MCF 10A (cell line): ENCODE measurements at regions of chr19 and their contacts with region 1.

Region 1: GRCh38 chr19:3429581-3430080 is 50.7 kb downstream of the SMIM24 start:
- DNase-seq: peak; percentile 99
- H3K4me3 Mint-ChIP-seq: peak overlapping the region; percentile 51
- H3K27ac Mint-ChIP-seq: peak overlapping the region; percentile 95
- H3K4me1 Mint-ChIP-seq: peaks cover 22% of the 10 kb centered on the region
- H3K27me3 Mint-ChIP-seq: no peaks in the 10 kb centered on the region
- CTCF ChIP-seq: peak; percentile 92

Region 2: DNA sequence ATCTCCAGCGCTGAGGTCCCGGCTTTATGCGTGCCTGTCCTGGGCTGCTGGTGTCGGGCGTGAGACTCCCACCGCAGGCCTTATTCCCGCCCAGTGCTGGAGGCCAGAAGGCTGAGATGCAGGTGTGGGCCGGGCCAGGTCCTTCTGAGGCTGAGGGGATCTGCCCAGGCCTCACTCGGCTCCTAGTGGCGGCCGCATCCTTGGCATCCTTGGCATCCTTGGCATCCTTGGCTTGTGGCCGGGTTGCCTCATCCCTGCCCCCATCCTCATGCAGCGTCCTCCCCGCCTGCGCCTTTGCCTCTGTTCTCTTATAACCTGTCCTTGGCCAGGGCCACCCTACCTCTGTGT is 313.4 kb before region 1 on chr19:
- CTCF ChIA-PET with region 1: no interaction called
- POLR2A ChIA-PET with region 1: no interaction called
- intact Hi-C with region 1: no loop called
- DNase-seq: peak; percentile 59
- H3K4me3 Mint-ChIP-seq: no peak overlapping the region
- H3K27ac Mint-ChIP-seq: no peak overlapping the region
- H3K4me1 Mint-ChIP-seq: no peaks in the 10 kb centered on the region
- H3K27me3 Mint-ChIP-seq: no peaks in the 10 kb centered on the region
- CTCF ChIP-seq: no peak

Region 3: DNA sequence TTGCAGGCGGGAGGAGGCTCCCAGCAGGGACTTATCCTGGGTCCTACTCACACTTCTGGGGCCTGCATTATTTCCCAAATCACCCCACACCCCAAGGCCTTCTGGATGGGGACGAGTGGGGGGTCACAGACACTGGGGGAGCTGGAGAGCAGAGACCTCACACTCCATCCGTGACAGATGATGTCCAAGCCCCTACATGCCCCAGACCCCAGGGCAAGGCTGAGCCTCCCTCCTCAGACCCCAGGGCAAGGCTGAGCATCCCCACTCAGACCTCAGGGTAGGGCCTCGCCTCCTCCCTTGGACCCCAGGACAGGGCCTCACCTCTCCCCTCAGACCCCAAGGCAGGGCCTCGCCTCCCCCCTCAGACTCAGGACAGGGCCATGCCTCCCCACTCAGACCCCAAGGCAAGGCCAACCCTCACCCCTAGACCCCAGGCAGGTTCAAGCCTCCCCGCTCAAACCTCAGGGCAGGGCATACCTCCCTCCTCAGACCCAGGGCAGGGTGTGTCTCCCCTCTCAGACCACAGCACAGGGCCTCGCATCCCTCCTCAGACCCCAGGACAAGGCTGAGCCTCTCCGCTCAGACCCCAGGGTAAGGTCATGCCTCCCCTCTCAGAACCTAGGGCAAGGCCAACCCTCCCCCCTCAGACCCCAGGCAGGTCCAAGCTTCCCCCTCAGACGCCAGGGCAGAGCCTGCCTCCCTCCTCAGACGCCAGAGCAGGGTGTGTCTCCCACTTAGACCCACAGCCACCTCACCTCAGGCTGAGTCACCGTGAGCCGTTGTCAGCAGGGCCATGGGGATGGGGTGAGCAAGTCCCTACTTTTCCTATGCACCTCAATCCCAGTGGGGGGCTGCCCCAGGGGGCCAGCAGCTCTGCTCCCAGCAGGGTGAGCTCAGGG is 252.8 kb before region 1 on chr19:
- CTCF ChIA-PET with region 1: no interaction called
- POLR2A ChIA-PET with region 1: no interaction called
- intact Hi-C with region 1: no loop called
- DNase-seq: peak; percentile 80
- H3K4me3 Mint-ChIP-seq: peak overlapping the region; percentile 60
- H3K27ac Mint-ChIP-seq: peak overlapping the region; percentile 100
- H3K4me1 Mint-ChIP-seq: peaks cover 21% of the 10 kb centered on the region
- H3K27me3 Mint-ChIP-seq: no peaks in the 10 kb centered on the region
- CTCF ChIP-seq: no peak

Region 4: DNA sequence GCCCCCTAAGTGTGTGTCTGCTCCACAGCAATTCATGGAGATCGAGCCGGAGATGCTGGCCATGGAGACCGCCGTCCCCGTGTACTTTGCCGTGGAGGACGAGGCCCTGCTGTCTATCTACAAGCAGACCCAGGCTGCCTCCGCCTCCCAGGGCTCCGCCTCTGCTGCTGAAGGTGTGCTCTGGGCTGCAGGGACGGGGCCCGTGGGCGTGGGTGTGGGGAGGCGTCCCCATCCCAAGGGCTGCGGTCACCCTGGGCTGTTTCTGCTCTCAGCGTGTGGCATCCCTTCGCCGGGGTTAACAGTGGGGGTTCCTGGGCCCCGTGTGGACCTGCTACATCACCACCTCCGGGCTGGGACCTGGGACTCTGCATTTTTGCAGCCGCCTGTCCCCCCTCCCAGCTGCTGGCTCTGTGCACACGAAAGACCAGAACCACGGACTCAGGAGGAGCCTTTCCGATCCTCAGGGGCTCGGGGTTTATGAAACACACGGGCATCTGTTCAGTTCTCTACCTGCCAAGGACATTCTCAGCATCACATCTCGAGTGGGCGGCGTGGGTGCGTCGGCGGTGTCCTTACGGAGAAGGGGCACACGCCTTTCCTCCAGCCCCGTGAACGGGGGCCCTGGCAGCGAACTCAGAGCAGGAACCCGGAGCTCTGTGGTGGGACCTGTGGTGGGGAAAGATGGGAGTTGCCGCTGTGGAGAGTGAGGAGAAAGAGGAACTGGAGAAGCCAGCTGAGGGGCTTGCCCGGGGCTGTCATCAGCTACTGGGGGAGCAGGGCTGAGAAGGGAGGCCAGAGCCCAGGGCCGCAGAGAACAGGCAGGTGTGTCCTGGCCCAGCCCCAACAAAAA is 236.2 kb before region 1 on chr19:
- CTCF ChIA-PET with region 1: no interaction called
- POLR2A ChIA-PET with region 1: no interaction called
- intact Hi-C with region 1: no loop called
- DNase-seq: no peak
- H3K4me3 Mint-ChIP-seq: no peak overlapping the region
- H3K27ac Mint-ChIP-seq: no peak overlapping the region
- H3K4me1 Mint-ChIP-seq: peaks cover 7% of the 10 kb centered on the region
- H3K27me3 Mint-ChIP-seq: no peaks in the 10 kb centered on the region
- CTCF ChIP-seq: no peak

Region 5: GRCh38 chr19:3324321-3324856 is 105.2 kb before region 1 on chr19:
- CTCF ChIA-PET with region 1: interaction called, 14 read pairs
- POLR2A ChIA-PET with region 1: interaction called, 7 read pairs
- intact Hi-C with region 1: loop called (anchors 1 kb)
- DNase-seq: peak; percentile 62
- H3K4me3 Mint-ChIP-seq: no peak overlapping the region
- H3K27ac Mint-ChIP-seq: no peak overlapping the region
- H3K4me1 Mint-ChIP-seq: no peaks in the 10 kb centered on the region
- H3K27me3 Mint-ChIP-seq: peaks cover 39% of the 10 kb centered on the region
- CTCF ChIP-seq: peak; percentile 75

Region 6: GRCh38 chr19:3343619-3344502 is 85.8 kb before region 1 on chr19:
- CTCF ChIA-PET with region 1: interaction called, 3 read pairs
- POLR2A ChIA-PET with region 1: interaction called, 11 read pairs
- intact Hi-C with region 1: no loop called
- DNase-seq: peak; percentile 97
- H3K4me3 Mint-ChIP-seq: peak overlapping the region; percentile 11
- H3K27ac Mint-ChIP-seq: no peak overlapping the region
- H3K4me1 Mint-ChIP-seq: peaks cover 20% of the 10 kb centered on the region
- H3K27me3 Mint-ChIP-seq: no peaks in the 10 kb centered on the region
- CTCF ChIP-seq: no peak

Region 7: GRCh38 chr19:3378352-3379150 is 51.1 kb before region 1 on chr19:
- CTCF ChIA-PET with region 1: interaction called, 12 read pairs
- POLR2A ChIA-PET with region 1: interaction called, 9 read pairs
- intact Hi-C with region 1: no loop called
- DNase-seq: no peak
- H3K4me3 Mint-ChIP-seq: no peak overlapping the region
- H3K27ac Mint-ChIP-seq: no peak overlapping the region
- H3K4me1 Mint-ChIP-seq: peaks cover 28% of the 10 kb centered on the region
- H3K27me3 Mint-ChIP-seq: no peaks in the 10 kb centered on the region
- CTCF ChIP-seq: no peak

Region 8: GRCh38 chr19:3471954-3472655 is 42.5 kb after region 1 on chr19:
- CTCF ChIA-PET with region 1: interaction called, 6 read pairs
- POLR2A ChIA-PET with region 1: interaction called, 3 read pairs
- intact Hi-C with region 1: loop called (anchors 1 kb)
- DNase-seq: peak; percentile 34
- H3K4me3 Mint-ChIP-seq: no peak overlapping the region
- H3K27ac Mint-ChIP-seq: no peak overlapping the region
- H3K4me1 Mint-ChIP-seq: peaks cover 6% of the 10 kb centered on the region
- H3K27me3 Mint-ChIP-seq: no peaks in the 10 kb centered on the region
- CTCF ChIP-seq: peak; percentile 79